Aorta (tissue), 5 donors: ENCODE measurements at regions of chr3 and their contacts with region 1.

Region 1: GRCh38 chr3:110413807-110414748 is 657.5 kb upstream of the NECTIN3 start:
- DNase-seq: no peak
- ATAC-seq: peak; percentile 75
- H3K4me3 ChIP-seq: no peak overlapping the region
- H3K27ac ChIP-seq: peak overlapping the region; percentile 79 to 80
- H3K4me1 ChIP-seq: peaks cover 0 to 4% of the 10 kb centered on the region in 2 donors
- H3K27me3 ChIP-seq: no peaks in the 10 kb centered on the region

Region 2: DNA sequence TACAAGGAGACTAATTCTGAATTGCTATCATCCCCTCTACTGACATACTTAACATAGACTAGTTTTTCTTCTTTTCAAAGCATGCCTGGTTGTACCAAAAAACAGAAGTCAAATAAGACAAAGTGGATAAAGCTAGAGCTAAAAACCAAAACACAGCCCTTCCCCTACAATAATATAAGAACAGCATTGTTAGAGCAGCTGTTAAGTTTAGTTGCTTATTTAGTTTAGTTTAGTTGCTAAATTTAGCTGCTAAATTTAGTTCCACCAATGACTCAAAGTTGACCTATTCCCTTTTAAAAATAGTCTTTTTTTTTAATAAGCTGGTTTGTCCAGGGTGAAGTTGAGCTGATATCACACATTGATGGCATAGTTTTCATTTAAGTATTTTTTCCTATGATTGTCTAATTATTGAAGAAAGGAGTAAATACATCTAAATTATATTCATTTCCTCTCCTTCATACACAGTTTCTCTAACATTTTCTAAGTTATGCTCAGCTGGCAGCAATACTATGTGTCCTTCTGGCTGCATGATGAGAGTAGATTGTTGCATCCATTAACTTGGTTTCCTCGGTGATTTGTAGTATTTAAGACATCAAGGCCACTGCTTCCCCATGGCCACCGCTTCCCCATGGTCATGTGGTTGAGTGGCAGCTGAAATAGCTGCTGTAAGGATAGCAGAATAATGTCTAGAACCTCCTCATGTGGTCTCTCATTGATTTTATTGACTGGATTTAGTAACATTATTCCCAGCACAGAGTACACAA is 61.1 kb before region 1 on chr3:
- intact Hi-C with region 1: loop called in 1 of 2 experiments (anchors 10 kb)
- DNase-seq: no peak
- ATAC-seq: no peak
- H3K4me3 ChIP-seq: no peak overlapping the region
- H3K27ac ChIP-seq: peak overlapping the region in 1 of 2 donors; percentile 48
- H3K4me1 ChIP-seq: peaks cover 0 to 2% of the 10 kb centered on the region in 2 donors
- H3K27me3 ChIP-seq: no peaks in the 10 kb centered on the region